Activated T-helper 1 cell treated with anti-CD3 and anti-CD28 coated beads, Interleukin-12 subunit alpha, Interleukin-12 subunit beta, Interleukin-2, Interleukin-4 antibody, amounts not matched to agents 30 ng/mL and 10 ng/mL and 1 ng/mL, durations not matched to agents 14 hours and 24 hours and 36 hours (primary cell): ENCODE measurements at regions of chr1 and their contacts with region 1.

Region 1: GRCh38 chr1:109263597-109264398 is 14.5 kb downstream of the CELSR2 start:
- DNase-seq: peak; percentile 71
- H3K4me3 Mint-ChIP-seq: no peak overlapping the region
- H3K27ac Mint-ChIP-seq: peak overlapping the region; percentile 49
- H3K4me1 Mint-ChIP-seq: no peaks in the 10 kb centered on the region
- H3K27me3 Mint-ChIP-seq: no peaks in the 10 kb centered on the region

Region 2: GRCh38 chr1:109201123-109201703 is 62.6 kb before region 1 on chr1:
- intact Hi-C with region 1: loop called (anchors 1 kb)
- DNase-seq: no peak
- H3K4me3 Mint-ChIP-seq: no peak overlapping the region
- H3K27ac Mint-ChIP-seq: peak overlapping the region; percentile 26
- H3K4me1 Mint-ChIP-seq: peaks cover 38% of the 10 kb centered on the region
- H3K27me3 Mint-ChIP-seq: peaks cover 2% of the 10 kb centered on the region